Activated T-helper 2 cell treated with anti-CD3 and anti-CD28 coated beads, Interferon-gamma antibody, Interleukin-2, Interleukin-4, amounts not matched to agents 10 μg/mL and 5 μg/mL and 100 μg/mL, durations not matched to agents 14 hours and 24 hours and 36 hours (primary cell): ENCODE measurements at regions of chr1 and their contacts with region 1.

Region 1: DNA sequence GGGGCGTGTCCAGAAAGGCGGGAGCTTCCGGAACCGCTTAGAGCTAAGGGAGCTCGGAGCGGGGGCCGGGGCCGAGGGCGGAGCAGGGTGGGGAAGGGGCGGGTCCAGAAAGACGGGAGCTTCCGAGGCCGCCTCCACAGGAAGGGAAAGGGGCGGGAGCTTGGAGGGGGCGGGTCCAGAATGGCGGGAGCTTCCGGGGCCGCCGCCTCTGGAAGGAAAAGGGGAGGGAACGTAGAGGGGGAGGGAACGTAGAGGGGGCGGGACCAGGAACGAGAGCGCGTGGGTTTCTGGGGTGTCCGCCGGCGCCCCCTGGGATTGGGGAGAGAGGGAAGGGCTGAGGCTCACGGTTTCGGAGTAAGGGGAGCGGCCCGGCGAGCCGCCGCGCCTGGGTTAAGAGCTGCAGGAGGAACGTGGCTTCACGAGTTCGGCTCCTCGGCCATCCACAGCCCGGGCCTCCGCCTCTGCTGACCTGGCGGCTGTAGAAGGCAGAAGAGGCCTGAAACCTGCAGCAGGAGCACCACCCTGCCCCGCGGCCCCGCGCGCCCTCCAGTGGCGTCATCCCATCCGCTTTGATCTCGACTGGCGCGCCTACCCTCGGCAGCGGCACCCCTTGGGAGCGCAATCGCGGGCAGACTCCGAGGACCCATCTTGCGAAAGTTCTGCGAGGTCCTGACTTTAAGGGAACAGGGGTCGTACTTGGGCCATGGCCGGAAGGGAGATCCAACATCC is 22.9 kb upstream of the HPDL start:
- DNase-seq: peak; percentile 89
- H3K4me3 Mint-ChIP-seq: peak overlapping the region; percentile 91
- H3K27ac Mint-ChIP-seq: peak overlapping the region; percentile 95
- H3K4me1 Mint-ChIP-seq: peaks cover 31% of the 10 kb centered on the region
- H3K27me3 Mint-ChIP-seq: no peaks in the 10 kb centered on the region

Region 2: GRCh38 chr1:44807262-44808062 is 496.3 kb before region 1 on chr1 and contains the start of gene DYNLT4:
- intact Hi-C with region 1: loop called (anchors 5 kb)
- DNase-seq: peak; percentile 87
- H3K4me3 Mint-ChIP-seq: peak within 1 kb of the TSS; percentile 75
- H3K27ac Mint-ChIP-seq: peak within 1 kb of the TSS; percentile 99
- H3K4me1 Mint-ChIP-seq: peaks cover 68% of the 10 kb centered on the region
- H3K27me3 Mint-ChIP-seq: no peaks in the 10 kb centered on the region
- total RNA-seq, gene DYNLT4: 0.32 TPM in 1 of 2 replicates, not detected in the other

Region 3: GRCh38 chr1:45051005-45051772 is 252.6 kb before region 1 on chr1:
- intact Hi-C with region 1: no loop called
- DNase-seq: no peak
- H3K4me3 Mint-ChIP-seq: peak overlapping the region; percentile 24
- H3K27ac Mint-ChIP-seq: no peak overlapping the region
- H3K4me1 Mint-ChIP-seq: peaks cover 12% of the 10 kb centered on the region
- H3K27me3 Mint-ChIP-seq: peaks cover 19% of the 10 kb centered on the region

Region 4: DNA sequence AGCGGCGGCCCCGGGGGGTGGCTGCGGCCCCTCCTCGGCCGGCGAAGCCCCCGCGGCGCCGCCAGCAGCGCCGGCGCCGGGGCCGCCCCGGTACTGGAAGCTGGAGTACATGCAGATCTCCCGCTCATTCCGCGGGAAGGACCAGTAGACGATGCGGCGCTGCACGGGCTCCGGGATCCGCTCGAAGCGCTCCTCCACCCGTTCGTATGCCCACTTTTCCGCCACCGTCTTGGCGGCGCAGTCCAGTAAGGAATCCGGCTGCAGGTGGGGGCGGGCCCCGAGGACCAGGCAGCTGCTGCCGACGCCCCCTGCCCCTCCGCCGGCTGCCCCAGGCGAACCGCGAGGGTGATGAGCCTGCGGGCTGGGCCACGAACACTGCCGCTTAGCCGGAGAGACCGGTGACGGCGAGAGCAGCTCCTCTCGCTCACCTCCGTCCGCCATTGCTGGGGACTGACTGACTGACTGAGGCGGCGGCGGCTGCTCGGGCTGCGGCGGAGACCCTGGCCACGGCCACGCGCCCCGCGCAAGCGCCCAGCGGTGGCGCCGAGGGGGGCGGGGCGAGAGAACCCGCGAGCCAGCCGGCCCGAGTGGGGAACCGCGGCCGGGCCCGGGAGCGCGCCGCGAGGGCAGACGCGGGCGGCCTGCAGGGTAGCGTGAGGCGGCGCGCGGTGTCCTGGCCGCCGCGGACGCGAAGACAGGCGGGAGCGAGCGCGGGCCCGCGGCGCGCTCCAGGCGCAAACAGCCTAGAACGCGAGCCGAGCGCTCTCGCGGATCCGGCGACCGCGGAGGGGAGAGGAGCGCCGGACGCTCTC is 97.6 kb before region 1 on chr1 and contains the start of gene ZSWIM5:
- intact Hi-C with region 1: loop called (anchors 10 kb)
- DNase-seq: peak; percentile 46
- H3K4me3 Mint-ChIP-seq: peak within 1 kb of the TSS; percentile 80
- H3K27ac Mint-ChIP-seq: peak within 1 kb of the TSS; percentile 20
- H3K4me1 Mint-ChIP-seq: peaks cover 14% of the 10 kb centered on the region
- H3K27me3 Mint-ChIP-seq: peaks cover 51% of the 10 kb centered on the region
- total RNA-seq, gene ZSWIM5: 0.14 and 0.21 TPM in 2 replicates

Region 5: DNA sequence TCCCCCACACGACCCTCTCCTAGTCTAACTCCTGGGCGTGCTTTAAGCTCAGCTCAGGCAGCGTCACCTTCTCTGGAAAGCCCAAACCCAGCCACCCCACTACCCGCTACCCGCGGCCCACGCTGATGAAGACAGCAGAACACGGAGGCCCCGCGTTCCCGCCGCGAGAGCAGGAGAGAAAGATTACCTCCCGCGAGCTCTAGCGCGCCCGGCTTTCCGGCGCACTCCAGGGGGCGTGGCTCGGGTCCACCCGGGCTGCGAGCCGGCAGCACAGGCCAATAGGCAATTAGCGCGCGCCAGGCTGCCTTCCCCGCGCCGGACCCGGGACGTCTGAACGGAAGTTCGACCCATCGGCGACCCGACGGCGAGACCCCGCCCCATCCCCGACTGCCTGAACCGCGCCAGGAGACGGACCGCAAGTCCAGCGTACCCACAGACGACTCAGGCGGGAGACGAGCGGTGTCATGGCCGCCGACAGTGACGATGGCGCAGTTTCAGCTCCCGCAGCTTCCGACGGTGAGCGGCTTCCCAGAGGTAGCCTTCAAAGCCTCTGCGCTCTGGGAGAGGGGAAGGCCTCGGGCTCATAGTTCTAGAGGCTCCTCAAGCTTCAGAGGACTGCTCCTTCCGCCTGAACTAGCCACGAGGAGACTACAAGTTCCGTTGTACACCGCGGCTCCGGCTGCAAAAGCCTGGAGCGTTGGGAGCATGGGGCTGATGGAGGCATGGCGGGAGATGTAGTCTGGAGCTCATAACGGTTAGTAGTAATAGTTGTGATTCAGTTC is 36.2 kb after region 1 on chr1 and contains the starts of genes MUTYH and TOE1:
- intact Hi-C with region 1: loop called (anchors 1 kb)
- DNase-seq: peak; percentile 95
- H3K4me3 Mint-ChIP-seq: peak within 1 kb of the TSS; percentile 95
- H3K27ac Mint-ChIP-seq: peak within 1 kb of the TSS; percentile 99
- H3K4me1 Mint-ChIP-seq: peaks cover 37% of the 10 kb centered on the region
- H3K27me3 Mint-ChIP-seq: no peaks in the 10 kb centered on the region
- total RNA-seq, gene MUTYH: 50.1 and 50.9 TPM in 2 replicates
- total RNA-seq, gene TOE1: 26.3 and 29.3 TPM in 2 replicates

Region 6: GRCh38 chr1:45621501-45621836 is 317.7 kb after region 1 on chr1:
- intact Hi-C with region 1: no loop called
- DNase-seq: no peak
- H3K4me3 Mint-ChIP-seq: no peak overlapping the region
- H3K27ac Mint-ChIP-seq: no peak overlapping the region
- H3K4me1 Mint-ChIP-seq: no peaks in the 10 kb centered on the region
- H3K27me3 Mint-ChIP-seq: no peaks in the 10 kb centered on the region